AG04450 (cell line): ENCODE measurements at regions of chr2 and their contacts with region 1.

Region 1: GRCh38 chr2:17719562-17720371 is 33.8 kb downstream of the SMC6 start:
- DNase-seq: no peak
- H3K4me3 ChIP-seq: no peak overlapping the region
- H3K27ac ChIP-seq: no peak overlapping the region
- H3K27me3 ChIP-seq: no peaks in the 10 kb centered on the region
- CTCF ChIP-seq: peak; percentile 83

Region 2: GRCh38 chr2:17736989-17737388 is 17.2 kb after region 1 on chr2:
- CTCF ChIA-PET with region 1: interaction called, 61 read pairs
- POLR2A ChIA-PET with region 1: no interaction called
- DNase-seq: peak; percentile 32
- H3K4me3 ChIP-seq: no peak overlapping the region
- H3K27ac ChIP-seq: peak overlapping the region; percentile 84
- H3K27me3 ChIP-seq: no peaks in the 10 kb centered on the region
- CTCF ChIP-seq: no peak

Region 3: DNA sequence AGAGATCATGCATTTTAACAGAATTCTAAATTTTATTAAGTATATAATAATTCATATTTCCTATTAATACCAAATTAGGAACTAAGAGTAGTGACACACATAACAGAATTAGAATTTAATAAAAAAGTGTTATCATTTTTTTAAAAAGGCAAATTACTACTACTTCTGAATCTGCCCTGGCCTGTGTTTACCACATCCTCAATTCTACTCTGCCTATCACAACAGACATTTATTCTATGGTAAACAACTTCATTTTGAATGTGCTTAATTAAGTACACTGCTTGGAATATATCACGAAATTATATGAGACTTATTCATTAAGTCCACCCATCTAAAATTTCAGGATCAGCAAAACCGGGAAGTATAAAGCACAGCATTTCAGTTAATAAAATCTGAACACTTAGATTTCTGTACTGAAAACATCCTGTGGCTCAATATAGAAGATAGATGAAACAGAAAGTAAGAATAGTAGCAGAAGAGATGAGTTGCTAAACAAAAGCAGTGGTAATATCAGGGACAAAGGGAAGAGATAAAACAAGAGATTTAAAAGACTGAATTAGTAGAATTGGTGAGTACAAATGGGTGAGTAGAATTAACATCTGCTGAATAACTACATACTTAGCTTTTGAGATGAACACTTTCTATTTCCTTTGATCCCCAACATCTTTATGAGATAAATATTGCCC is 30.1 kb after region 1 on chr2:
- CTCF ChIA-PET with region 1: interaction called, 13 read pairs
- POLR2A ChIA-PET with region 1: no interaction called
- DNase-seq: no peak
- H3K4me3 ChIP-seq: no peak overlapping the region
- H3K27ac ChIP-seq: no peak overlapping the region
- H3K27me3 ChIP-seq: no peaks in the 10 kb centered on the region
- CTCF ChIP-seq: no peak

Region 4: GRCh38 chr2:17757321-17757720 is 37.6 kb after region 1 on chr2:
- CTCF ChIA-PET with region 1: interaction called, 18 read pairs
- POLR2A ChIA-PET with region 1: no interaction called
- DNase-seq: no peak
- H3K4me3 ChIP-seq: no peak overlapping the region
- H3K27ac ChIP-seq: no peak overlapping the region
- H3K27me3 ChIP-seq: no peaks in the 10 kb centered on the region
- CTCF ChIP-seq: no peak

Region 5: DNA sequence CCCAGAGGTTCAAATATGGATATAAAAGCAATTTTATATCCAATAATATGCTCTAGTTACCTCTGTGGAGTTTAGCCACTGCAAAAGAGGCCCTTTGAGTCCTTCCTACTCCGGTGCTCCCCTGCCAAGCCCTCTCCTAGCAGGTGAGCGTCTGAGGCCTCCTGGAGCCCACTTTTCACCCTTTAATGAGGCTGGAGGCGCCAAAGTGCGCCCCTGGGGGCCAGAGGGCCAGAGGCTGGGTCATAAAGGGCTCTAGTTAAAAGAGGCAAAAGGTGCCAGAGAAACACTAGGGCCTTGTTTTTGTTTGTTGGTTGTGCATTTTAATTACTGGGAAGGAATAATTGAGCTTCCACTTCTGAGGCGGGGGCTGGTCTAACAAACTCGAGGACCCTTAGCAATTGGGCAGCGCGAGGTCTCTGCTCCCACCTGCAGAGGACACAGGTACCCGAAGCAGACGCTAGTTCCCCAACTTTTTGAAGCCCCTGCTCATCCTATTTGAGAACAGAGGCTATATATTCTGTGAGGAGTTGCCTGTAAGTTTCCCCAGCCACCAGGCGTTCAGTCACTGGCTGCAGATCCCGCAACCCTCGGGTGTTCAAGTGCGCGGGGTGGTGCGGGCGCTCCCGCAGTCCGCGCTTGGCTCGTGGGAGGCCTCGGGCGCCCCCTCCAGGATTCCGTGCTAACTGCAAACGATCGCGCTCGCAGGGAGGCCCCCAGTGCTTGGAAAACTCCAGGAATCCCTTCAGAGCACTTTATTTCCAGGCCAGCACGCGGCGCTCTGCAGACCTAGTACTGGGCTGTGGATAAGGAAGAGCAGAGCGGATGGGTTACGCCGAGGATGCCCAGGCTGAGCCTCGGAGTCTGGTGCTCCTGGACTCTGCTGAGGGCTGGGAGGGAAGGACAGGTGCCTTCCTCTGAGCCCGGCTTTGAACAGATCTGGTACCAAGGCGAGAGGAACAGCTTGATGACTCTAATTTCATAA is 110.6 kb after region 1 on chr2:
- CTCF ChIA-PET with region 1: interaction called, 21 read pairs
- POLR2A ChIA-PET with region 1: no interaction called
- DNase-seq: peak; percentile 20
- H3K4me3 ChIP-seq: peak overlapping the region; percentile 27; the same call in 1 of the 2 replicates
- H3K27ac ChIP-seq: no peak overlapping the region
- H3K27me3 ChIP-seq: peaks cover 18% of the 10 kb centered on the region
- CTCF ChIP-seq: peak; percentile 83